A673 (cell line): ENCODE measurements at regions of chr3 and their contacts with region 1.

Region 1: DNA sequence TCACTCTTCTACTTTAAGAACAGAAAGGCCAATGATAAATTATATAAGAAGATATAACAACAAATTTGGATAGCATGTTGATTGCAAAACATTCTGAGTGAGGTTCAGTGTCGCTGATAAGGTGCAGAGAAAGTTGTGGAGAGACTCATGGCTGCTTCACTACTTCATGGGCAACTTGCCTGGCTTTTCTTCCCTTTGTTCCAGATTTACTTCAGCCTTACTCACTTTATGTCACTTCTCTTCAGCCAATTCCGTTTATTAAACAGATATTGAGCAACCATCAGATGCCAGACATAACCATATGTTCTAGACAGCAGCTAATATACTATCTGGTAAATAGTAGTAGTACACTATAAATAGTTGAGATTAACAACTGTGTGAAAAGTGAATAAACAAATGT is 150.0 kb upstream of the CHL1 start:
- DNase-seq: no peak
- H3K4me3 ChIP-seq: no peak overlapping the region
- H3K27ac ChIP-seq: no peak overlapping the region
- H3K4me1 ChIP-seq: no peaks in the 10 kb centered on the region
- H3K27me3 ChIP-seq: no peaks in the 10 kb centered on the region
- CTCF ChIP-seq: no peak

Region 2: DNA sequence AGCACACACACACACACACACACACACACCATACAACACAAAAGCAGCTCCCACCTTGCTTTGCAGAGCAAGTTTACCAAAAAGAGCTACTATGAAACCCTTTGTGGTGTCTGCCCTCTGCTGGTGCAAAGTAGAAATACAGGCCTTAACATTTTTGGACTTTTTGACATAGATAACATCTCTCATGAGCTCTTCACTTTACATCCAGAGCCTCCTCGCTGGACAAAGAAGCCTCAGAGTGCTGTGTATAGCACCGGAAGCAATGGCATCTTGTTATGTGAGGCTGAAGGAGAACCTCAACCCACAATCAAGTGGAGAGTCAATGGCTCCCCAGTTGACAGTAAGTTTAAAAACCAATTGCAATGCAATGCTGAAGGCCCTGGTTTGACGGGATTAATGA is 307.9 kb after region 1 on chr3:
- CTCF ChIA-PET with region 1: interaction called, 29 read pairs
- POLR2A ChIA-PET with region 1: no interaction called
- intact Hi-C with region 1: loop called (anchors 1 kb)
- DNase-seq: peak; percentile 75
- H3K4me3 ChIP-seq: no peak overlapping the region
- H3K27ac ChIP-seq: no peak overlapping the region
- H3K4me1 ChIP-seq: peaks cover 6% of the 10 kb centered on the region
- H3K27me3 ChIP-seq: no peaks in the 10 kb centered on the region
- CTCF ChIP-seq: peak; percentile 83

Region 3: DNA sequence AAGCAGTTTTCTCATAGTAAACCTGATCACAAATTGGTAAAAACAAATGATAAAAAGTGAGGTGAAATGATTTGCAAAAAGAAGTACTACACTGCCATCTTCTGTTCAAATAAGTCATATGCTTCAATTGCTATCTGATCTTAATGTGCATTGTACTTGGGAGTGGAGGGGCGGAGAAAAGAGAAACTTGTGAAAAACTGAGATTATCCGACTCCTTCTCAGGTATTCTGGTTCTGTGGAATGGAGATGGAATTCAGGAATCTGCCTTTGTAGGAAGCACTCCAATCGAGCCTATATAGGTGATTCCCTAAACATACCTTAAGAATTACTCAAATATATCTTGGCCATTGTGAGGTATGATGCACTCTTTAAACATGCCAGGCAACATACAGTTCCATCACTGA is 330.6 kb after region 1 on chr3:
- CTCF ChIA-PET with region 1: no interaction called
- POLR2A ChIA-PET with region 1: no interaction called
- intact Hi-C with region 1: loop called (anchors 1 kb)
- DNase-seq: peak; percentile 56
- H3K4me3 ChIP-seq: no peak overlapping the region
- H3K27ac ChIP-seq: no peak overlapping the region
- H3K4me1 ChIP-seq: no peaks in the 10 kb centered on the region
- H3K27me3 ChIP-seq: no peaks in the 10 kb centered on the region
- CTCF ChIP-seq: peak; percentile 64

Region 4: GRCh38 chr3:420584-420983 is 374.0 kb after region 1 on chr3:
- CTCF ChIA-PET with region 1: no interaction called
- POLR2A ChIA-PET with region 1: no interaction called
- intact Hi-C with region 1: no loop called
- DNase-seq: no peak
- H3K4me3 ChIP-seq: no peak overlapping the region
- H3K27ac ChIP-seq: no peak overlapping the region
- H3K4me1 ChIP-seq: no peaks in the 10 kb centered on the region
- H3K27me3 ChIP-seq: no peaks in the 10 kb centered on the region
- CTCF ChIP-seq: no peak